IMR-90 (cell line): ENCODE measurements at regions of chr1 and their contacts with region 1.

Region 1: DNA sequence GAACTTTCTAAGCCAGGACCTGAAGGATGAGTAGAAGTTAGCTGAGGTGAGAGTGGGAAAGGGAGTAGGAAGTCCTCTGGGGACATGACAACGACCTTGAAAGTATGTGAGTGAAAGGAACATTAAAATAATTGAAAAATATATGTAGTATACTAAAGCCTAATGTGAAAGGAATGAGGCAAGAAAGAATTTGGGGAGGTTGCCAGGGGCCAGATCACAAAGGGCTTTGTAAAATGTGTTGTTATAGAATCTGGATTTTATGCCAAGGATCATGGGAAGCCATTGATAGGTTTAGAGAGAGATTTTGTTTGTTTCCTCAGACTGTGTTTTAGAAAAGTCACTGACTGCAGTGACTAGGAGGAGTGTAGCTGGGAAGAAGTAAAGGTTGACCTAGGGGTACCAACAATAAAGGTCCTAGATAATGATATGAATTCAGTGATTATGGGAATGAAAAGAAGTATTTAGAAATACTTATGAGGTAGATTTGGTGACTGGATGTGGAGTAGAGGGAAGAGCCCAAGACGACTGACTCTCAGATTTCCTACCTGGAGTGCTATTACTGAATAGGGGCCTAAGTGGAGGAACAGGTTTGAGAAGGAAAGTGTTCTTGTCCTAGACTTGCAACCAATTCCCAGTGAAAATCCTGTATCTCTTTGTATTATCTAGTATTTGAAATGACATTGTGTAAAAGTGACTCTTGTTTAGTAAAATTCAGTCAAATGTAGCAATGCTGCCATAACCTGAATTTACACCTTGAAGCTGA is 179.8 kb downstream of the PHTF1 start:
- DNase-seq: peak; percentile 7
- ATAC-seq: no peak
- H3K4me3 ChIP-seq: no peak overlapping the region
- H3K27ac ChIP-seq: no peak overlapping the region
- H3K4me1 ChIP-seq: no peaks in the 10 kb centered on the region
- H3K27me3 ChIP-seq: no peaks in the 10 kb centered on the region
- CTCF ChIP-seq: no peak
- POLR2A ChIP-seq: no peak
- RAD21 ChIP-seq: no peak

Region 2: DNA sequence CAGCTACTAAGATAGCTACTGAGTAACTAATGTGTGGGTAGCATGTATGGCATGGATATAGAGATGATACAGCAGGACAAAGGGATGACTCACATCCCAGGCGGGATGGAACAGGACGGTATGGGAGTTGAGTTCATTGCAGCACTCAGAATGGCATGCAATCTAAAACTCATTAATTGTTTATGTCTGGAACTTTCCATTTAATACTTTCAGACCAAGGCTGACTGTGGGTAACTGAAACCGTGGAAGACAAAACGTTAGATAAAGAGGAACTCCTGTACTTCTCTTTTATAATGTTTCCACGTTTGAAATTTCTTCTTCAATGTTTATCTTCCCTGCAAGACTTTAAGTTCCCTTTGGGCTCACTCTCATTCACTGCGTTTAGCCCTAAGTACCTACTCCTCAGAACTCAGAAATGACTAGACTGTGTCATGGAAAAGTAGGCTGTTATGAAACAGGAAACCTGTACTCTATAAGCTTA is 37.2 kb before region 1 on chr1:
- CTCF ChIA-PET with region 1: interaction called, 3 read pairs
- POLR2A ChIA-PET with region 1: no interaction called
- dilution Hi-C with region 1: no loop called
- in situ Hi-C with region 1: no loop called
- intact Hi-C with region 1: loop called (anchors 5 kb)
- DNase-seq: peak; percentile 95
- ATAC-seq: peak; percentile 97
- H3K4me3 ChIP-seq: no peak overlapping the region
- H3K27ac ChIP-seq: no peak overlapping the region; the same call in 1 of the 2 replicates
- H3K4me1 ChIP-seq: peaks cover 9% of the 10 kb centered on the region
- H3K27me3 ChIP-seq: no peaks in the 10 kb centered on the region
- CTCF ChIP-seq: no peak
- POLR2A ChIP-seq: no peak
- RAD21 ChIP-seq: peak; percentile 15; the same call in 1 of the 2 replicates